CD8-positive, alpha-beta T cell (primary cell): ENCODE measurements at regions of chr11 and their contacts with region 1.

Region 1: GRCh38 chr11:506238-506994 is 626 bp downstream of the RNH1 start:
- DNase-seq: peak; percentile 93 to 99 (median 98)
- ATAC-seq: peak; percentile 67
- H3K4me3 ChIP-seq: peak overlapping the region; percentile 93 to 99
- H3K4me3 Mint-ChIP-seq: peak overlapping the region; percentile 97
- H3K27ac ChIP-seq: peak overlapping the region; percentile 99 to 100
- H3K27ac Mint-ChIP-seq: peak overlapping the region; percentile 99
- H3K4me1 ChIP-seq: peaks cover 36% of the 10 kb centered on the region
- H3K4me1 Mint-ChIP-seq: peaks cover 25% of the 10 kb centered on the region
- H3K27me3 ChIP-seq: no peaks in the 10 kb centered on the region
- H3K27me3 Mint-ChIP-seq: no peaks in the 10 kb centered on the region
- CTCF ChIP-seq: no peak

Region 2: GRCh38 chr11:313787-314547 is 192.4 kb before region 1 on chr11 and contains the start of gene IFITM1:
- CTCF ChIA-PET with region 1: no interaction called
- POLR2A ChIA-PET with region 1: interaction called, 3 read pairs
- intact Hi-C with region 1: loop called in 1 of 2 experiments (anchors 5 kb)
- DNase-seq: peak in 7 of 9 experiments; percentile 54 to 86 (median 71)
- ATAC-seq: peak; percentile 49
- H3K4me3 ChIP-seq: peak within 1 kb of the TSS; percentile 95 to 97
- H3K4me3 Mint-ChIP-seq: peak within 1 kb of the TSS; percentile 95
- H3K27ac ChIP-seq: peak within 1 kb of the TSS; percentile 83 to 88
- H3K27ac Mint-ChIP-seq: peak within 1 kb of the TSS; percentile 98
- H3K4me1 ChIP-seq: peaks cover 18% of the 10 kb centered on the region
- H3K4me1 Mint-ChIP-seq: peaks cover 45% of the 10 kb centered on the region
- H3K27me3 ChIP-seq: no peaks in the 10 kb centered on the region
- H3K27me3 Mint-ChIP-seq: no peaks in the 10 kb centered on the region
- CTCF ChIP-seq: no peak
- total RNA-seq, gene IFITM1: 223 to 251 TPM

Region 3: GRCh38 chr11:416757-417621 is 89.4 kb before region 1 on chr11:
- CTCF ChIA-PET with region 1: no interaction called
- POLR2A ChIA-PET with region 1: interaction called, 3 read pairs
- intact Hi-C with region 1: loop called (anchors 2 kb)
- DNase-seq: peak in 7 of 9 experiments; percentile 39 to 77 (median 55)
- ATAC-seq: peak; percentile 11
- H3K4me3 ChIP-seq: peak overlapping the region; percentile 82 to 96
- H3K4me3 Mint-ChIP-seq: peak overlapping the region; percentile 96
- H3K27ac ChIP-seq: peak overlapping the region; percentile 69 to 75
- H3K27ac Mint-ChIP-seq: no peak overlapping the region
- H3K4me1 ChIP-seq: peaks cover 27% of the 10 kb centered on the region
- H3K4me1 Mint-ChIP-seq: peaks cover 27% of the 10 kb centered on the region
- H3K27me3 ChIP-seq: no peaks in the 10 kb centered on the region
- H3K27me3 Mint-ChIP-seq: no peaks in the 10 kb centered on the region
- CTCF ChIP-seq: no peak

Region 4: GRCh38 chr11:568306-569157 is 62.1 kb after region 1 on chr11:
- CTCF ChIA-PET with region 1: no interaction called
- POLR2A ChIA-PET with region 1: interaction called, 3 read pairs
- intact Hi-C with region 1: loop called in 1 of 2 experiments (anchors 2 kb)
- DNase-seq: peak; percentile 82 to 97 (median 92)
- ATAC-seq: peak; percentile 92
- H3K4me3 ChIP-seq: peak overlapping the region; percentile 64 to 71
- H3K4me3 Mint-ChIP-seq: peak overlapping the region; percentile 80
- H3K27ac ChIP-seq: peak overlapping the region; percentile 45 to 68
- H3K27ac Mint-ChIP-seq: peak overlapping the region; percentile 64
- H3K4me1 ChIP-seq: peaks cover 8% of the 10 kb centered on the region
- H3K4me1 Mint-ChIP-seq: peaks cover 11% of the 10 kb centered on the region
- H3K27me3 ChIP-seq: no peaks in the 10 kb centered on the region
- H3K27me3 Mint-ChIP-seq: no peaks in the 10 kb centered on the region
- CTCF ChIP-seq: no peak

Region 5: DNA sequence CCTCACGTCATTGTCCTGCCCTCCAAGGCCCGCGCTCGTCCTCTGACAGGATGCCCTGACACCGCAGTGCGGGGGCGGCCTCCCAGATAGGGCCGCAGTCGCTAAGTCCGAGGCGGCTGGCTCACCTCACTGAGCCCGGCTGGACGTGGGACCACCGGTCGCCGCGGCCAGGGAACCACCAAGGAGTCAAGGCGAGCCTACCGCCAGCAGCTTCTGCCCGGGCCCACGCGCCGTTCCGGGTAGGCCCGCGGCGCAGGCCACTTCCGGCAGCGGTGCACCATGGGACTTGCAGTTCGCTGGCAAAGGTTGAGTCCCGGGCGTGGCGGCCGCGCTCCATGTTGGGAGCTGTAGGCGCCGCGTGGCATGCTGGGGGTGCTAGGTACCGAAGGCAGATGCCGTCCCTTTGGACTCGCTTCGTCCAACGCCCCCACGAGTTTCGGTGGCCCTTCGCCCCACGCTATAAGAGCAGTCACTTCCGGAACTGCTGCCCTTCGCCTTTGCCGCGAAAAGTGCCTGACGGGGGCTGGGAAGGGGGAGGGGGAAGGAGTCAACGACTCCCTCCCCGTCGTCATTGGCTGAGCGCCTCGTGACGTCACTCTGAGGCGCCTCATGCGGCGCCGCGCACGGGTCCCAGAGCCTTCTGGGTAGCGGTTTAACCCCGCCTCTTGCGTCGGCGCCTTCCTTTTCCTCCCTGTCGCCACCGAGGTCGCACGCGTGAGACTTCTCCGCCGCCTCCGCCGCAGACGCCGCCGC is 303.0 kb after region 1 on chr11 and contains the start of gene RPLP2:
- CTCF ChIA-PET with region 1: no interaction called
- POLR2A ChIA-PET with region 1: no interaction called
- intact Hi-C with region 1: loop called in 1 of 2 experiments (anchors 1 kb)
- DNase-seq: peak; percentile 93 to 99 (median 98)
- ATAC-seq: peak; percentile 80
- H3K4me3 ChIP-seq: peak within 1 kb of the TSS; percentile 85 to 96
- H3K4me3 Mint-ChIP-seq: peak within 1 kb of the TSS; percentile 94
- H3K27ac ChIP-seq: peak within 1 kb of the TSS; percentile 80 to 100
- H3K27ac Mint-ChIP-seq: peak within 1 kb of the TSS; percentile 97
- H3K4me1 ChIP-seq: peaks cover 37% of the 10 kb centered on the region
- H3K4me1 Mint-ChIP-seq: peaks cover 25% of the 10 kb centered on the region
- H3K27me3 ChIP-seq: no peaks in the 10 kb centered on the region
- H3K27me3 Mint-ChIP-seq: no peaks in the 10 kb centered on the region
- CTCF ChIP-seq: no peak
- total RNA-seq, gene RPLP2: 5,702 to 5,720 TPM